Heart right ventricle (tissue), 16 donors: ENCODE measurements at regions of chr13 and their contacts with region 1.

Region 1: DNA sequence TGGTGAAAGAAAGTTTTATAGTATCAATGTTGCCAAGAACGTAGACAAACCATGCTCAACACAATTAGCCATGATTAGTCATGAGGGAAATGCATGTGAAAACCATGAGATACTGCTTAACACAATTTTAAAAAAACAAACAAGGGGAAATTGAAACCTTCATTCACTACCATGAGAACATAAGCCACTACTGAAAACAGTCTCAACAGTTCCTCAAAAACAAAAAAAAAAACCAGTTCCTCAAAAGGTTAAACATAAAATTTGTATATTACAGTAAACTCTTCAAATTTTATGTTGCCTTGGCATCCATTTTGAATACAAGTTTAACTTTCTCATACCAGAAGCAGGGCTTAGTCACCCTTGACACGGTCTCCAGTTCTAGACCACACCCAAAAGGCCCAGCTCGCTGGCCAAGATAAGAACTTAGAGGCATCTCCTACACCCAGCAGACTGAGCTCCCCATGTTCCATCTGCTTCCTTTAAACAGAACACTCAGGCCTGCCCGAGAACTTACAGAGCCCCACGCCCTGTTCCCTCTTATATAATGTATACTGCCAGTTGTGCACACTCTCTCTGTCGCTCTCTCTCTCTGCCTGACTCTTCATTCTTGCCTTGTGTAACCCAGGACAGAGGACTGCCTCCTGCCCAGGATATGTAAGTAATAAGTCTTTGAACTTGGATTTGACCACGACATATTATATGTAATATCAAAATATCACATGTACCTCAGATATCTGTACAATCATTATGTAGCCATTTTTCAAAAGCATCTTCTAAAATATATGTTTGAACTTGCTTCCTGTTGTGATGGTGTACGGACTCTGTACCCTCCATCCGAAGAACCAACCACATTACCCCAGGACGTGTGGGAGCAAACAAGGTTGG is 67.4 kb downstream of the STK24 start:
- DNase-seq: peak in 1 of 2 donors; percentile 44
- ATAC-seq: peak in 7 of 8 donors; percentile 40 to 83 (median 73)
- H3K4me3 ChIP-seq: no peak overlapping the region
- H3K27ac ChIP-seq: peak overlapping the region in 9 of 10 donors; percentile 3 to 85 (median 46)
- H3K4me1 ChIP-seq: peaks cover 26 to 84% (median 73%) of the 10 kb centered on the region in 9 donors
- H3K27me3 ChIP-seq: no peaks in the 10 kb centered on the region
- CTCF ChIP-seq: no peak

Region 2: DNA sequence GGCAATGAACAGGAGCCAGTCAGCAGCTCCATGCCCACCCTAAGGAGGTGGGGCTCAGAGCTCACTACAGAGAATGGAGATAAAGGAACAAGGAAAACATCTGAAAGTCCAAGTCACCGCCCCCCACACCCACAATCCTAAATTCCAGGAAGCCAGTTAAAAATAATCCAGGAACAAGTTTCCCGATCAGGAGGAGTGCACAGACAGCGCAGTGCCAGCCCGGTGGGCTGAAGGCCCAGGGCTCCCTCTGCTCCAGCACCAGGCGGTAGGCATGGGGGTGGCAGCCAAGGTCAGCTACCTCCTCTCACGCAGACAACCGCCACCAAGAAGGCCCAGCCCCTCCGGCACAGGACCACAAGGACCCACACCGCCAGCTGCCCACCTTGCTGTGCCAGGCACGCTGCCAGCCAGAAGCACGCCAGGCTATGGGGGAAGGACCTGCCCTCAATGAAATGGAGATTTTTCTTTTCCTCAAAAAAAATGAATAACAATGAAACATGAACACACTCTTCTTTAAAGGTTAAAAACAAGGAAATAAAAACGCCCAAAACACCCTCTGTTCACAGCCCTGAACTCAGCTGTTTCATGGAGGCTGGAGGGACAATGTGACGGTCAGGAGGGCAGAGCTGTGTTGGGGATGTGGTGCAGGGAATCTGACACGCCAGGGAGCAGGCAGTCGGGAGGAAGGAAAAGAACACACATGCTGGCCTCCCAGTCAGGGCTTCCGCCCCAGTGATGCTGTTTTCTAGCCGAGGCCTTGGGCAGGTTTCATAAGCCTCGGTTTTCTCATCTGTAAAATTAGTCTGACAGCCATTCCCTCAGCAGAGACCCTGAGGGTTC is 56.4 kb after region 1 on chr13:
- intact Hi-C with region 1: loop called in 5 of 10 experiments (anchors 5 to 10 kb)
- DNase-seq: peak; percentile 51 to 55
- ATAC-seq: peak; percentile 74 to 95 (median 88)
- H3K4me3 ChIP-seq: peak overlapping the region in 5 of 10 donors; percentile 11 to 30 (median 27)
- H3K27ac ChIP-seq: peak overlapping the region; percentile 1 to 85 (median 77)
- H3K4me1 ChIP-seq: peaks cover 14 to 97% (median 79%) of the 10 kb centered on the region in 9 donors
- H3K27me3 ChIP-seq: no peaks in the 10 kb centered on the region
- CTCF ChIP-seq: no peak

Region 3: GRCh38 chr13:98570929-98571372 is 61.4 kb after region 1 on chr13:
- intact Hi-C with region 1: loop called in 7 of 10 experiments (anchors 2 to 10 kb)
- DNase-seq: no peak
- ATAC-seq: peak in 6 of 8 donors; percentile 26 to 60 (median 54)
- H3K4me3 ChIP-seq: peak overlapping the region in 6 of 10 donors; percentile 5 to 44 (median 30)
- H3K27ac ChIP-seq: peak overlapping the region in 9 of 10 donors; percentile 6 to 78 (median 42)
- H3K4me1 ChIP-seq: peaks cover 7 to 100% (median 67%) of the 10 kb centered on the region in 9 donors
- H3K27me3 ChIP-seq: no peaks in the 10 kb centered on the region
- CTCF ChIP-seq: no peak